Mucosa of descending colon (tissue), 3 donors: ENCODE measurements at regions of chr20 and their contacts with region 1.

Region 1: GRCh38 chr20:46174469-46175128 is 56.5 kb downstream of the CD40 start:
- DNase-seq: peak; percentile 72 to 84 (median 76)
- ATAC-seq: peak; percentile 93
- H3K4me3 ChIP-seq: no peak overlapping the region
- H3K4me1 ChIP-seq: no peaks in the 10 kb centered on the region
- CTCF ChIP-seq: peak; percentile 55

Region 2: DNA sequence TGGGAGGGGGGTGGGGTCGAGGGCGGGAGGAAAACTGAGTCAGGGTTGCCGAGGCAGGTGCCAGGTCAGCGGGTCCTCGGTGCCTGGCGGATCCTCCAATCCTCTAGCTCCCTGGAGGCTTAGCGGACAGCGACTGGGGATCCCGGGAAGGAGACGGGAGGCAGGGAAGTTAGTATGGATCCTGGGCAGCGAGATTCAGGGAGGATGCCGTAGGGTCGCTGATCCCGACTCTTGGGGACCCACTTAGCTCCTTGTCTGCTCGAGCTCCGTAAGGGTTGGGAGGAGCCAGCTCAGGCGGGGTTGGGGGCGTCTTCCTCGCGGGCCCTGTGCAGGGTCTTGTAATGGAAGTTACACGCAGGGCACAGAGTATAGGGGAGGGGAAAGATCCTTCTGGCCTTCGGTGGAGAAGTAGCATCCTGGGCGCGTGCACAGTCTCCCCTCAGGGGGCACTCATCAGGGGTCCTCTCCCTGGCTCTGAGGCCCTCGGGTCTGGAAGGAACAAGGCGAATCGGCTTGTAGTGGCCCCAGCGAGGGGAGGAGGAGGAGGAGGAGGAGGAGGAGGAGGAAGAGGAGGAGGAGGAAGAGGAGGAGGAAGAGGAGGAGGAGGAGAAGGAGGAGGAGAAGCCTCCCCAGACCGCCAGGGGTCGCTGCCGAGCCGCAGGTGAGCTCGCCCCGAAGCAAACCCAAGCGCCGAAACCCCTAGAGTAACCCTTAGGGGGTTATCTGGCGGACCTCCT is 152.0 kb before region 1 on chr20:
- intact Hi-C with region 1: loop called (anchors 10 kb)
- DNase-seq: peak; percentile 71 to 76 (median 75)
- ATAC-seq: peak; percentile 74
- H3K4me3 ChIP-seq: no peak overlapping the region
- H3K4me1 ChIP-seq: peaks cover 12% of the 10 kb centered on the region
- CTCF ChIP-seq: peak; percentile 57